ENCODE measurements at regions of chr18 and their contacts with region 1.

Region 1: GRCh38 chr18:3771121-3771971 is 321.4 kb downstream of the TGIF1 start:
- DNase-seq: peak; percentile 93
- H3K4me3 ChIP-seq: peak overlapping the region in 2 of 3 experiments; percentile 35 to 53
- H3K27ac ChIP-seq: peak overlapping the region; percentile 37
- H3K4me1 ChIP-seq: peaks cover 40% of the 10 kb centered on the region
- H3K27me3 ChIP-seq: no peaks in the 10 kb centered on the region
- CTCF ChIP-seq: peak; percentile 93 to 94
- POLR2A ChIP-seq: no peak

Region 2: GRCh38 chr18:3593904-3594661 is 177.3 kb before region 1 on chr18:
- CTCF ChIA-PET with region 1: interaction called, 13 read pairs
- POLR2A ChIA-PET with region 1: no interaction called
- dilution Hi-C with region 1: no loop called
- intact Hi-C with region 1: no loop called
- DNase-seq: peak; percentile 98
- H3K4me3 ChIP-seq: peak overlapping the region; percentile 8 to 93 (median 48)
- H3K27ac ChIP-seq: peak overlapping the region; percentile 100
- H3K4me1 ChIP-seq: peaks cover 48% of the 10 kb centered on the region
- H3K27me3 ChIP-seq: no peaks in the 10 kb centered on the region
- CTCF ChIP-seq: peak; percentile 62 to 80
- POLR2A ChIP-seq: peak; percentile 81

Region 3: DNA sequence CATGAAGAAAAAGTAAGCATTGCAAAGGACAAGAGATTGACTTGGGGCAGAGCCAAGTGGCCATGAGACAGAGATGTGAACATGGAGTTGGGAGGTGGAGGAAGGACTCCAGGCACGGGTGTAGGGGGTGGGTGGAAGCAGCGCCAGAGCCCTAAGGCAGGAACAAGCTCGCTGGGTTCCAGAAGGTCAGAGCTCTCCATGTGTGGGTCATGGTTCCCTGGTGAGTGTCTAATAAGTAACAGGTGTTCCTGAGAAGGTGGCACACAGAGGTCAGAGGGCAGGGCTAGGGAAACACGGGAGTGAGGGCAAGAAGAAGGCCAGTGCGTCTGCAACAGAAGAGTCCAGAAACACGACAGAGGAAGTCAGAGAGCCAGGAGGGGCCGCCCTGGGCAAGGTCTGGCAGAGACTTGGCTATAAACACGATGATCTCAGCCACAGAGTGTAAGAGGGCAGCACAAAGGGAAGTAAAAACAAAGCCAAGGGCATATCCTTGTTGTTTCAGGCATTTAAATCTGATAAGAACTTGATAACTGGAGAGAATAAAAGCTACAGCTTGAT is 60.6 kb before region 1 on chr18:
- CTCF ChIA-PET with region 1: interaction called, 88 read pairs
- POLR2A ChIA-PET with region 1: no interaction called
- dilution Hi-C with region 1: no loop called
- intact Hi-C with region 1: loop called (anchors 1 kb)
- DNase-seq: peak; percentile 96
- H3K4me3 ChIP-seq: no peak overlapping the region
- H3K27ac ChIP-seq: peak overlapping the region; percentile 90
- H3K4me1 ChIP-seq: peaks cover 27% of the 10 kb centered on the region
- H3K27me3 ChIP-seq: no peaks in the 10 kb centered on the region
- CTCF ChIP-seq: no peak
- POLR2A ChIP-seq: peak; percentile 93

Region 4: GRCh38 chr18:3758531-3758930 is 12.8 kb before region 1 on chr18:
- CTCF ChIA-PET with region 1: interaction called, 13 read pairs
- POLR2A ChIA-PET with region 1: no interaction called
- dilution Hi-C with region 1: no loop called
- intact Hi-C with region 1: no loop called
- DNase-seq: peak; percentile 21
- H3K4me3 ChIP-seq: no peak overlapping the region
- H3K27ac ChIP-seq: no peak overlapping the region
- H3K4me1 ChIP-seq: no peaks in the 10 kb centered on the region
- H3K27me3 ChIP-seq: no peaks in the 10 kb centered on the region
- CTCF ChIP-seq: no peak
- POLR2A ChIP-seq: no peak

Region 5: DNA sequence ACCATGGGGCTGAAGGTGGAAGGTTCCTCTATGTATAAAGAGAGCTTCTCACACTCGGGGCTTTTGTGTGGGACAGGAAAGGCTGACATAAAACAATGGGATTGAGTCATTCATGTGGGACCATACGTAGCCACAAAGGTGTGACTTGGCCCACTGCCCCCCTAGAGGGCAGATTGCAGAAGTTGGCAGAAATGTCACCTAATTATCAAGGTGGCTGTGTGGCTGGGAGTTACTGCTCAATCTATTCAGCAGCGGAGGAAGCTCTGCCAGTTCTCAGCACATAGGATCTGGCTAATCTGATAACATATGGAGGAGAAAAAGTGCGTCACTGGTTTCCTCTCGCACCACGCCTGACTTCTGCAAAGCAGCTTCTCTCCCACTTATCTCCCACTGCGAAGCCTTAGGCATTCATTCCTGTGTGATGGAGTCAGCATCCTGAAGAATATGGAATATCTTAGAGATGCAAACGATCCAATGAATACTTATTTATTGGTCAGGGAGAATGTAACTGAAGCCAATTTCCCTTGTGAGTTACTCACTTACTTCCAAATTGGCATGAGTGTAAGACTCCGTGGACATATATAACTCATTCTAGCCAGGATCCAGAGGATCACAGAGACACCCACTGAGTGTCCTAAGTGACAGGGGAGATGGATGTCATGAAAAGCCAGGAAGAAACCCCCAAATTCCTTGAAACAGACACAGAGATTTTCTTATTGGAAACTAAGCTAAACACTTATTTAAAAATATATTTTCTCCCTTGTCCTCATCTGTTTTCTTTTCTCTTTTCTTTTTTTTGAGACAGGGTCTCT is 23.4 kb after region 1 on chr18:
- CTCF ChIA-PET with region 1: interaction called, 84 read pairs
- POLR2A ChIA-PET with region 1: interaction called, 8 read pairs
- dilution Hi-C with region 1: no loop called
- intact Hi-C with region 1: loop called (anchors 1 kb)
- DNase-seq: peak; percentile 97
- H3K4me3 ChIP-seq: no peak overlapping the region
- H3K27ac ChIP-seq: peak overlapping the region; percentile 95
- H3K4me1 ChIP-seq: peaks cover 34% of the 10 kb centered on the region
- H3K27me3 ChIP-seq: no peaks in the 10 kb centered on the region
- CTCF ChIP-seq: peak in 1 of 2 donors; percentile 6
- POLR2A ChIP-seq: no peak

Region 6: DNA sequence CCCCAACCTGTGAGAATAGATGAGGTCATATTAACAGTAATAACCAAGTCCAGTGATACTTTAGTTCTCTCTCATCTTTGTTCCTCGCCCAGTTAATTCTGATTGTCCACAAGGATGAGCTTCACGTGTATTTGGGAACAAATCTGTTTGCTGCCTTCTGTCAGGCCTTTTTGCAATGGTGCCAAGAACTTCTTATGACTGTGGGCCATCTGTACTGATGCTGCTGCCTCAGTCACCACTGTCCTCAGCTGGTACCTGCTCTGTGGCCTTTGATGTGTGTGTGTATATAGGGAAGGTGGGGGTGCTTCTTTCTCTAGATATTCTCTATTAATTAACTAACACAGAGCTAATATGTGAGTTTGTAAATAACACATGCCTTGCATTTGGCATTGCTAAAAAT is 71.5 kb after region 1 on chr18:
- CTCF ChIA-PET with region 1: interaction called, 15 read pairs
- POLR2A ChIA-PET with region 1: no interaction called
- dilution Hi-C with region 1: no loop called
- intact Hi-C with region 1: no loop called
- DNase-seq: no peak
- H3K4me3 ChIP-seq: no peak overlapping the region
- H3K27ac ChIP-seq: no peak overlapping the region
- H3K4me1 ChIP-seq: no peaks in the 10 kb centered on the region
- H3K27me3 ChIP-seq: peaks cover 4 to 8% of the 10 kb centered on the region in 2 experiments
- CTCF ChIP-seq: no peak
- POLR2A ChIP-seq: no peak

Region 7: GRCh38 chr18:3923750-3924149 is 152.4 kb after region 1 on chr18:
- CTCF ChIA-PET with region 1: no interaction called
- POLR2A ChIA-PET with region 1: no interaction called
- dilution Hi-C with region 1: no loop called
- intact Hi-C with region 1: no loop called
- DNase-seq: no peak
- H3K4me3 ChIP-seq: no peak overlapping the region
- H3K27ac ChIP-seq: no peak overlapping the region
- H3K4me1 ChIP-seq: no peaks in the 10 kb centered on the region
- H3K27me3 ChIP-seq: no peaks in the 10 kb centered on the region
- CTCF ChIP-seq: no peak
- POLR2A ChIP-seq: no peak

Region 8: DNA sequence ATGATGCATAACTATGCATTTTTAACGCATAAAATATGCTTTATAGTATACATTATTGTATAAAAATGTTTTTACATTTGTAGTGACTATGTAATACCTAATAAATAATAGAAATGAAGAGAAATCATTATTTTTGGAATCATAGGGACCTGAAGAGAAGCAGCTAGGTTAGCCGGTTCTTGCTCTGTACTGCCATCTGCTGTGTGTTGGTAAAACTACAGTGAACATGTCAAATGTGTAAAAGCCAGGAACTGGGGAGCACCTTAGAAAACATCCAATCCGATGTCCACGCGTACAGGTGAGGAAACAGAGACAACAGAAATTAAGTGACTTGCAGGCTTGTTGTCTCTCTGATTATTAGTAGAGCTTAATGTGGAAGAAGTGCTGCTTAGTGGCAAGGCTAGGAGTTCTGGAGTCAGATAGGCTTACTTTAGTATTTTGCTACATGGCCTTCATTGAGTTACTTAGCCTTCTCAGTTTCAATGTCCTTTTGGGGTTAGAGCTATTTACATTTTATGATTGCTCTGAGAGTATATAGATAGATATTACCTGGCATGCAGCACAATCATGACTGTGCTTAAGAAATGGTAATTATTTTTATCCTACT is 297.3 kb after region 1 on chr18:
- CTCF ChIA-PET with region 1: no interaction called
- POLR2A ChIA-PET with region 1: no interaction called
- dilution Hi-C with region 1: no loop called
- intact Hi-C with region 1: loop called (anchors 1 kb)
- DNase-seq: peak; percentile 58
- H3K4me3 ChIP-seq: no peak overlapping the region
- H3K27ac ChIP-seq: no peak overlapping the region
- H3K4me1 ChIP-seq: no peaks in the 10 kb centered on the region
- H3K27me3 ChIP-seq: no peaks in the 10 kb centered on the region
- CTCF ChIP-seq: peak; percentile 52 to 66
- POLR2A ChIP-seq: no peak